IMR-90 (cell line): ENCODE measurements at regions of chr1 and their contacts with region 1.

Region 1: GRCh38 chr1:89762779-89763648 is 57.8 kb upstream of the LRRC8D start:
- DNase-seq: peak; percentile 78
- ATAC-seq: peak; percentile 100
- H3K4me3 ChIP-seq: peak overlapping the region; percentile 56
- H3K27ac ChIP-seq: no peak overlapping the region; the same call in 1 of the 2 replicates
- H3K4me1 ChIP-seq: peaks cover 6% of the 10 kb centered on the region
- H3K27me3 ChIP-seq: no peaks in the 10 kb centered on the region
- CTCF ChIP-seq: peak; percentile 99
- POLR2A ChIP-seq: no peak
- RAD21 ChIP-seq: peak; percentile 98

Region 2: DNA sequence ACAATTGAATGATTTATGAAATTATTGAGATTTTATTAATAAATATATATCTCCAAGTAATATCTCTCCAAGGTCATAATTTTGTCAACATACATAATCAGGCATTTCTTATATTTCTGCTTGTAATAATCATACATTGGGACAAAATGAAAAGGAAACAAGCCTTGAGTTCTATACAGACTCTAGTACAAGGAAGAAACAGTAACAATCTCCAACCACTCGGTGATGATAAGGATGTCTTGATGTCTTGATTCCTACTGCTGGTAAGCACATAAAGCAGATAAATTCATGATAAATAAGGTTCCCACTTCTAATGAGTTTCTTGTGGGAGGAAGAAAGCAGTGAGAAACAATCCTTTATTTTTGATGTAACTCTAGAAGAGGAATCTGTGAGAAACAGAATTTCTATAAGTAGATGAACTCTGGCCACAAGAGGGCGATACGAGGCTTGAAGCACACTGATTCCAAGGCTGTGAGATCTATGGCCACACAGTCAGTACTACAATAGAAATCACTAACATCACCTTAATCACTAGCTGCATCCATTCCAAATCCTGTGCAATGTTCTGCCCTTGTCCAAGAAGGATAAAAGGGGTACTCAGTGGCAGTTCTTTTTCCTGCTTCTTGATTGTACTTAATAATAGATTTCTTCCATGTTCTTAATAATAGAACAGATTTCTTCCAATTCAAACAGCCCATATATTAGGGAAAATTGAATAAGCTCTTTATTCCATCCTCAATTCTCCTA is 279.8 kb before region 1 on chr1:
- CTCF ChIA-PET with region 1: interaction called, 32 read pairs
- POLR2A ChIA-PET with region 1: no interaction called
- dilution Hi-C with region 1: no loop called
- in situ Hi-C with region 1: loop called (anchors 10 kb)
- intact Hi-C with region 1: loop called (anchors 1 kb)
- DNase-seq: peak; percentile 81
- ATAC-seq: peak; percentile 89
- H3K4me3 ChIP-seq: no peak overlapping the region
- H3K27ac ChIP-seq: no peak overlapping the region
- H3K4me1 ChIP-seq: no peaks in the 10 kb centered on the region
- H3K27me3 ChIP-seq: peaks cover 6% of the 10 kb centered on the region
- CTCF ChIP-seq: peak; percentile 71
- POLR2A ChIP-seq: no peak
- RAD21 ChIP-seq: peak; percentile 78

Region 3: DNA sequence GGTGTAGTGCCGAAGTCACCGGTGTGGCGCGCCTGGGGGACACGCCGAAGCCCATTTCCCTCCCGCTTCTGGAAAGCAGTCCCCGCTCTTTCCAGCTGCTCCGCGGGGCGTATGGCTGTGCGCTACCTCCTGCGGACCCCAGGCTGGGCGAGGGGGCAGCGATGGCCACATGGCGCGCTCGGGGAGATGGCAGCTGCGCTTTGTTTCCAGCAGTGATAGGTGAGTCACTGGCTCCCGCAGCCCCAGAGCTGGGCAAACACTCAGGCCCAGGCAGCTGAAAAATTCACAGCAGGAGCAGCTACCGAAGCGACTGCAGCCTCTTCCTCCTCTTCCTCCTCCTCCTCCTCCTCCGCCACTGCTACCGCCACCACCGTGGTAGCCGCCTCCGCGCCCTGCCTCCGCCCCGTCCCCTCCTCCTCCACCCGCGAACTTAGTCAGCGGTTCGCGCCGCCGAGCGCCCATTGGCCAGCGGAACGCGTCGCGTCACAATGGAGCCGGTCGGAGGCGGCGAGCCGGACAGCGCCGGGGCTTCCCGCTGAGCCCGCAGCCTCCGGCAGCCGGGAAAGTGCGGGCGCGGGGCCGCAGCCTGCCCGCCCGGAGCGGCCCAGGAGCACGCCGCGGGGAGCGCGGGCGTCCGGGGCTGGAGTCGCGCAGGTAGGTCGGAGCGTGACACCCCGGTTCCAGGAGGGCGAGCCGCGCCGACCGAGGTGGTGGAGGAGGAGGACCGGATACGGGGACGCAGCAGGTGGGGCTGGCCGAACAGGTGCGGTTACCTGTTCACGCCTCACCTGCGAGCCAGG is 238.4 kb before region 1 on chr1 and contains the start of gene LRRC8B:
- CTCF ChIA-PET with region 1: interaction called, 5 read pairs
- POLR2A ChIA-PET with region 1: no interaction called
- dilution Hi-C with region 1: no loop called
- in situ Hi-C with region 1: no loop called
- intact Hi-C with region 1: loop called (anchors 2 kb)
- DNase-seq: peak; percentile 71
- ATAC-seq: peak; percentile 99
- H3K4me3 ChIP-seq: peak within 1 kb of the TSS; percentile 62
- H3K27ac ChIP-seq: no peak within 1 kb of the TSS; the same call in 1 of the 2 replicates
- H3K4me1 ChIP-seq: peaks cover 2% of the 10 kb centered on the region; the same call in 1 of the 2 replicates
- H3K27me3 ChIP-seq: peaks cover 2% of the 10 kb centered on the region; the same call in 1 of the 2 replicates
- CTCF ChIP-seq: no peak
- POLR2A ChIP-seq: no peak
- RAD21 ChIP-seq: no peak
- total RNA-seq, gene LRRC8B: 1.4 and 1.8 TPM in 2 replicates

Region 4: DNA sequence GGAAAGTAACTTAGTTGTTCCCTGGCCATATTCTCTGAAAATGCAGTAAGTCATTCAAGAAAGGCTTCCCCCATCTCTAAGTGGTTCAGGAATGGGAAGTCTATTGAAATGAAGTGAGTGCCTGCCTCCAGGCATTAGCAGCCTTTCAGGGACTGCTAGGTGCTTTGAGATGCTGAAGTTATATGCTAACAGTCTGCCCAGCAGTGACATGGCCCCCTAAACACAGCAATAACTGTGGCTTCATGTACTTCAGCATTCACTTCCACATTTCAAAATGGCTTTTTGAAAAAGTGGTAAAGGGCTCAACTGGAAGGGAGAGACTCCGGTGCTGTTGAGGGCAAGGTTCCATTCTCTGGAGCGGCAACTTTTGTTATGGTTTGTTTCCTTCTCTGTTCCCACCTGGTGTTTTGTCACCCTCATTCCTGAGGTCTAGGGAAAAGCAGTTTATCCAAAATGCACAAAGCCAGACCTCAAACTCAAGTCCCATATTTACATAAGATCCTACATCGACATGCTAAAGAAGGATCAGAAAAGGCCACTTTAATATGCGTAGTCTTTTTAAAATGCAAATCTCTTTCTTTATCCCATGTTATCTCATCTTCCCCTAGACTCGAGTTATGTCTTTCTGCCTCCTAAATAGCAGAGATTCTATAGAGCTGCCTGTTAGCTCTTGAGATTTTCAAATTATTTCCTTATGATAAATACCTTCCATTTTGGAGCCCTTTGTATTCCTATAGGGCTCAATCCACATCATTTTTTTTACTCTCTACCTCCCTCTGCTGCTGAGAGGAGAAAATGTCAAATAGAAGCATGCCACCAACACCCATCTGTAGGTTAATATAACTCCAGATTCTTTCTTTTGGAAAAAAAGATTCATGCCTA is 164.3 kb before region 1 on chr1:
- CTCF ChIA-PET with region 1: interaction called, 7 read pairs
- POLR2A ChIA-PET with region 1: interaction called, 4 read pairs
- dilution Hi-C with region 1: no loop called
- in situ Hi-C with region 1: no loop called
- intact Hi-C with region 1: loop called (anchors 1 kb)
- DNase-seq: peak; percentile 39
- ATAC-seq: peak; percentile 88
- H3K4me3 ChIP-seq: no peak overlapping the region
- H3K27ac ChIP-seq: no peak overlapping the region
- H3K4me1 ChIP-seq: 0 out of 2 replicates have a peak, but pooled peaks cover 2% of the 10 kb centered on the region
- H3K27me3 ChIP-seq: no peaks in the 10 kb centered on the region
- CTCF ChIP-seq: peak; percentile 69
- POLR2A ChIP-seq: no peak
- RAD21 ChIP-seq: peak; percentile 60

Region 5: DNA sequence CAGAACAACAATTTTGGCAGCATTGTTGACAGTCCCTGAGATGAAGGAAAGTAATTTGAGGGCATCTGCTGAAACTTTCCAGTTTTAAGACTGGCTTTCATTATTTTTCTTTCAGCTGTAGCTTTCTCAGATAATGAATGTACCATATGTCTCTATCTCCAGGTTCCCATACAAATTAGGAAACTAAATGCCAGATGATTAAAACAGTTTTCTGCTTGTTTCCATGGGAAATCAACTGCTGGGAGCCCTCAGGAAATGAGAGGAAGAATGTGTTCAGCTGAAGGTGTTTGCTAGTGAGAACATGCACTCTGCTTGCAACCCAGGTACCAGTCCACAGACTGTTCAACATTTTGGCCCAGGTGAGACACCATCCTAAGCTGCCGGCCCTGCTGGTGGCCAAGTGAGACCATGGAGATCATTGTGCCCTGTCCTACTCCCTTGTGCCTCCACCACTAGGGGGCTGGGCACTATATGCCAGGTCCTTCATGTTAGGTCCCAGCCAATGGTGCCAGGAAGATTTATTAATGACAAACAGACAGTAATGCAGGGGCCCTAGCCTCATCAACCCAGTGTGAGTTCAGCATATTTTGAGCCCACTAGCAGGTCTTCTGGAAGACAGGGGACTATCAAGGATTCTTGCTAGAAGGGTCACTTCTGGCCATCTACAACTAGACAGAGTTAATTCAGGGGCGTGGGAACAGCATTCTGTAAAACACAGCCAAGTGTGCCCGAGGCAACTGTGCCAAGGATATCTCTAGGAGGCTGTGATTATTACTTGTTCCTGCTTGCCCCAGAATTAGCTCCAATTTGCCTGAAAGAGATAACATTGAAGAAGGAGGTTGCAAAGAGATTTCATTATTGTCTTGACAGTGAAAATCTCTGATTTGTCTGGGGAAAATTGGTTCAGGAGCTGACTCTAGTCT is 147.1 kb before region 1 on chr1:
- CTCF ChIA-PET with region 1: interaction called, 12 read pairs
- POLR2A ChIA-PET with region 1: no interaction called
- dilution Hi-C with region 1: no loop called
- in situ Hi-C with region 1: no loop called
- intact Hi-C with region 1: no loop called
- DNase-seq: no peak
- ATAC-seq: no peak
- H3K4me3 ChIP-seq: no peak overlapping the region
- H3K27ac ChIP-seq: no peak overlapping the region
- H3K4me1 ChIP-seq: no peaks in the 10 kb centered on the region
- H3K27me3 ChIP-seq: no peaks in the 10 kb centered on the region
- CTCF ChIP-seq: 0 out of 2 replicates have a peak, but pooled peaks have one; percentile 16
- POLR2A ChIP-seq: no peak
- RAD21 ChIP-seq: no peak

Region 6: DNA sequence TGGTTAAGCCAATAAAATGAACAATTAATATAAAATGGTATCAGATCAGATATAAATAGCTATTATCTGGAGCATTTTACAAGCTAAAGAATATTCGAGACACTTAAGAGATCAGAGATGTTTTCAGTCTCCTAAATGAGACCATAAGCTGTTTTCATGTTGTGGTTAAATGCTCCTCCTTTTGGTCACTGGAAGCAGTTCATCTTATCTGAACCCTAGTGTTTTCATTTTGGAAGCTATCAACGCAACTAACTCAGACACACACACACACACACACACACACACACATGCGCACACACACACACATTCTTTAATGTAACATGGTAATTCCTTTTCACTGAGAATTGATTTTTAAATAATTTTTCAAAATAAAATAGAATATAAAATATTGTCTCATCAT is 140.1 kb before region 1 on chr1:
- CTCF ChIA-PET with region 1: interaction called, 13 read pairs
- POLR2A ChIA-PET with region 1: no interaction called
- dilution Hi-C with region 1: no loop called
- in situ Hi-C with region 1: no loop called
- intact Hi-C with region 1: no loop called
- DNase-seq: peak; percentile 38
- ATAC-seq: no peak
- H3K4me3 ChIP-seq: no peak overlapping the region
- H3K27ac ChIP-seq: no peak overlapping the region
- H3K4me1 ChIP-seq: no peaks in the 10 kb centered on the region
- H3K27me3 ChIP-seq: no peaks in the 10 kb centered on the region
- CTCF ChIP-seq: peak; percentile 31; the same call in 1 of the 2 replicates
- POLR2A ChIP-seq: no peak
- RAD21 ChIP-seq: 0 out of 2 replicates have a peak, but pooled peaks have one; percentile 20

Region 7: DNA sequence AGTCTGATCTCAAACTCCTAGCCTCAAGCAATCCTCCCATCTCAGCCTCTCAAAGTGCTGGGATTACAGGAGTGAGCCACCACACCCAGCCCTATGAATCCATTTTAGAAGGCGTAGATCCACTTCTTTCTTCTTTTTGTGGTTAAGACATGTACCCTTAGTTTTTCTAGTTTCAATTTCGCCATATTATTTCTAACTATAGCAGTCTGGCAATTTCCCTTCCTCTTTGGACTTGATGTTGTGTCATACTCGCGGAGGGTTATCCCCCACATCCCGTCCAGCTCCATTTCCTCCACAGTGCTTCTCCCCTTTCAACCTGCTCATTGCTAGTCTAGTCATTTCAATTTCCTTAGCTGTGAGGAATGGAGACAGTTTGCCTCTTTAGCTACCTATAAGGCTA is 52.6 kb after region 1 on chr1:
- CTCF ChIA-PET with region 1: no interaction called
- POLR2A ChIA-PET with region 1: no interaction called
- dilution Hi-C with region 1: no loop called
- in situ Hi-C with region 1: no loop called
- intact Hi-C with region 1: no loop called
- DNase-seq: no peak
- ATAC-seq: no peak
- H3K4me3 ChIP-seq: no peak overlapping the region
- H3K27ac ChIP-seq: no peak overlapping the region
- H3K4me1 ChIP-seq: peaks cover 2% of the 10 kb centered on the region
- H3K27me3 ChIP-seq: no peaks in the 10 kb centered on the region; the same call in 1 of the 2 replicates
- CTCF ChIP-seq: no peak
- POLR2A ChIP-seq: no peak
- RAD21 ChIP-seq: no peak